Head of caudate nucleus (tissue), 42 donors: ENCODE measurements at regions of chr5 and their contacts with region 1.

Region 1: GRCh38 chr5:142925795-142926194 is 155.6 kb downstream of the ARHGAP26 start:
- DNase-seq: no peak

Region 2: DNA sequence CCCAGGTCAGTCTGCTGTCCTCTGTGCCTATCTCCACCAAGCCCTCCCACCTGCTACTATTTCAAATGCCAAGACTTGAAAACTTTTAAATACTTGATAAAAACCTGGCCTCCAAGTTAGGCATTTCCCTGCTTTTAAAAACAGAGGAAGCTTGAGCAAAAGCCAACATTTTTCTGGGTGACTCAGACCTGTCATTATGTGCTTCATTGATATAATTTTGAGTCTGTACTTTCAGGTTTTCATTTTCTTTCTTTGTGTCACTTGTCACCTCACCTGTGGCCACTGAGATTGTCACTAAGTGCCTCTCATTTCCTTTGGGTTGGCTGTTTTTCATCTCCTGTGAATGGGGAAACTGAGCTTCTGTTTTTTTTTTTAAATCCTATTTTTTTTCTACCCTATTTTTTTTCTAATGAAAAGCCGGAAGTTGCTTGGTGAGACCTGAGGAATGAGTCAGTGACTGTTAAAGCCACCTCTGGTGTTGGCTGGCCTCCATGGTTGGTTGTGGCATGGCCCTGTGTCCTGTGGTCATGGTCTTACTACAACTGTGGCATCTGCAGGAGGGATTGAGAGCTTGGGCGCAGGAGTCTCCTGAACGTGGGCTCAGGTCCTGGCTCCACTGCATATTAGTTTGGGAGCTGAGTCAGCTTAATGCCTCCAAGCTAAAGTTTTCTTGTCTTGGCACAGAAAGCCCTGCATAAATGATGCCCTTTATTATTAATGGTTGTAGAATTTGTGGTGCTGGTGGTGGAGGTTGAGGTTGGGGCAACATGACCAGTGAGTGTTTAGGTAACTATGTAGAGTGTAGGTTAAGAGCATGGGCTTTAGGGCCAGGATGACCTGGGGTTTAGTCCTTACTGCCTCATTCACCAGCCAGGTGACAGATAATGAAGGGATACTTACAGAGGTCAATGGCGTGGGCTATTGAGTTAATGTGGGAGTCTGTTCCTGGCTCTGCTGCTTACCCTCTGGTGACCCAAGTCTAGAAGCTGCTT is 98.8 kb before region 1 on chr5:
- intact Hi-C with region 1: no loop called
- DNase-seq: no peak

Region 3: DNA sequence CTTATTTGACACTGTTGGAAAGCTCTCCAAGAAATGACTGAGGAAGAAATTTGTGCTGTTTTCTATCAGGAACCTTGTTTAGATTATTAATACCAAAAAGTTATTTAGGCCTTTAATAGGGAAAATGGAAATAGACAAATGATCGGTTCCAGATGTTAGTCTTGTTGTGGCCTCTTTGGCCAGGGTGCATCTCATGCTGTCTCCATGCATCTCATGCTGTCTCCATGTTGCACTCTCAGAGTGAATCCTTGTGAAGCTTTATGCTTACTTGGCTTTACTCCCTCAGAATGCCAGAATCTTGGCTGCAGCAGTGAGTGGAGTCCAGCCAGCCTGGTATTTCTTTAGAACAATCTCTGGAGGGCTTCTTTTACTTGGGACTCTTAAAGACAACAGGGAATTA is 29.8 kb after region 1 on chr5:
- intact Hi-C with region 1: loop called (anchors 2 kb)
- DNase-seq: no peak